ENCODE measurements at regions of chr17 and their contacts with region 1.

Region 1: DNA sequence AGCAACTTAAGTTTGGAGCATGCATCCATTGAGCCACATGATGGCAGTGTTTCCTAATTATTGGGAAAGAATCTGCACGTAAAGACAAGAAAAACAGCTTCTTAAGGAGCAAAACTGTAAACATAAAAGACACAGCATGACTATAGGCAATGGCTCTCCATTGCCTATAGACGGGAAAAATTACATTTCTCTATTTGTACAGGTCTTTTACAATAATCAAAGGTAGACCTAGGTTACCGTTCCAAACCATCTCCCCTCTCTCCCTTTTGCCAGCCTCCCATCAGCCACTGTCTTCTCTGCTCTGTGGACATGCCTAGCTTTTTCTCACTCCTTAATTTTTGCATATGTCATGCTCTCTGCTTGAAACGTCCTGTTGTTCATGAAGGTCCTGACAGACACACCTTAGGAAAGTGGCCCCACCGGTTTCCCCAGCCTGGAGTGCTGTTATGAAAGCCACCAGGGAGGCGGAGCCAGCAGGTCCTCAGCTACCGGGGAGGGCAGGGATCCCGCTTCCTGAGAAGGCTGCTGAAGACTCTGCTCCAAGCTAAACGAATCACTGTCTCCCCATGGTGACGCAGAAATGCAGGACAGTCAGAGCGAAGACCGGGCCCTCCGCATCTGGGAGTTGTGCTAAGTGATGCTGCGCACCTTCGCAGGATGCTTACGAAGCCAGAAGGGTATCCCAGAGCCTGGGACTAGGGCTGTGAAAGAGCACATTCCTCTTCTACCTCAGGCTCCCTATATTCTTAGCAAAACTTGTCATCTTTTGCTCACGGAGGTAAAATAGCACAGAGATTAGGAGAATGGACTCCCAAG is 2.2 kb upstream of the SLC16A11 start:
- DNase-seq: peak; percentile 85
- ATAC-seq: peak; percentile 13
- H3K4me3 ChIP-seq: peak overlapping the region; percentile 42 to 67 (median 58)
- H3K4me3 Mint-ChIP-seq: peak overlapping the region; percentile 77
- H3K27ac ChIP-seq: peak overlapping the region; percentile 61 to 81
- H3K27ac Mint-ChIP-seq: peak overlapping the region; percentile 92
- H3K4me1 ChIP-seq: peaks cover 35 to 46% of the 10 kb centered on the region in 2 donors
- H3K4me1 Mint-ChIP-seq: peaks cover 39% of the 10 kb centered on the region
- H3K27me3 ChIP-seq: peaks cover 0 to 4% (median 0%) of the 10 kb centered on the region in 4 experiments
- H3K27me3 Mint-ChIP-seq: peaks cover 3% of the 10 kb centered on the region
- CTCF ChIP-seq: peak; percentile 82

Region 2: DNA sequence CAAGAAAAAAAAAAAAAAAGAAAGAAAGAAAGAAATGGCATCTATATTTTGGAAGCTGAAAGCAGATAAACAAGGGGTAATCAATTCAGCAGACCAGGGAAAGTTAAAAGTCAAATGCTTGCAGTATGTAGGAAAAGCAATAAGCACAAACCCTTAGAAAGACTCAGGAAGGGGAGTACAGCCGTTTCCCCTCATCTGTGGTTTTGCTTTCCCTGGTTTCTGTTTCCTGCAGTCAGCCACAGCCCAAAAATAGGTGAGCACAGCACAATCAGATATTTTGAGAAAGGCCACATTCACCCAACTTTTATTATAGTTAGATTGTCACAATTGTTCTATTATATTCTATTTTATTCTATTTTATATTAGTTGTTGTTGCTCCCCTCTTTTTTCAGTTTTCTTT is 64.7 kb before region 1 on chr17:
- CTCF ChIA-PET with region 1: no interaction called
- POLR2A ChIA-PET with region 1: no interaction called
- intact Hi-C with region 1: no loop called
- DNase-seq: no peak
- ATAC-seq: no peak
- H3K4me3 ChIP-seq: no peak overlapping the region
- H3K4me3 Mint-ChIP-seq: no peak overlapping the region
- H3K27ac ChIP-seq: no peak overlapping the region
- H3K27ac Mint-ChIP-seq: no peak overlapping the region
- H3K4me1 ChIP-seq: peaks cover 0 to 4% of the 10 kb centered on the region in 2 donors
- H3K4me1 Mint-ChIP-seq: peaks cover 3% of the 10 kb centered on the region
- H3K27me3 ChIP-seq: no peaks in the 10 kb centered on the region
- H3K27me3 Mint-ChIP-seq: no peaks in the 10 kb centered on the region
- CTCF ChIP-seq: no peak

Region 3: DNA sequence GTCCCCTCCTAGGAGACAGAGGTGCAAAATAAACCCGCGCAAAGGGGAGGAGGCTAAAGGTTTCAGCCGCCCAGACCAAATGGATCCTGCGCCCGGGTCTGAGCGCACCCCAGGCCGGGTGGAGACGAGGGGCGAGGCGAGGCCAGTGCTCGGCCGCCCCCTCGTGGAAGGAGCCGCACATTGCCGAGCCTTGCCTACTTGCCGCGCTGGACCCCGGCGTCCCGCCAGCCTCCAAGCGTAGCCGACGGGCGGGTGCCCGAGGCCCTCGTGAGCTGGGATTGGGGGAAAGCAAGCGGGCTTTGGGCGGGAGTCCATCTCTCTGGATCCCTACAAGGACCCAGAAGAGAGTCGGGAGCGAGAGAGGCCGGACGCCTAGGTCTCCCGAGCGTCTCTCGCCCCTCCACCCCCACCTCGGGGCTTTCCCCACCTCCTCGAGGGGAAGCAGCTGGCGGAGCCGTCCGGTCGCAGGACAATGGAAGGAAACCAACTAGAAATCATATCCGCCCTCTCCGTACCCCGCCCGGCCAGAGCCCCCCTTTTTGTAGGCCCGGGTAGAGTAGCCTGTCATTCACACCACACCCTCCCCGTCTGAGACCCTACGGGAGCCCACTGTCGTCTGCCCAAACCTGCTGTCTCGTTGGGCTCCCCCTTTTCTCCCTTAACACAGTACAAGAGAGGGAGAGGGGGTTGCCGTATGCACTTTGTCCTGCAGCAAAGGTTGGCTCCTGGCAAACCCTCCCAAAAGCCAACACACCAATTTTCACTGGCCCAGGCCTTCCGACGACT is 23.9 kb before region 1 on chr17:
- CTCF ChIA-PET with region 1: interaction called, 51 read pairs
- POLR2A ChIA-PET with region 1: interaction called, 6 read pairs
- intact Hi-C with region 1: no loop called
- DNase-seq: peak; percentile 92
- ATAC-seq: peak; percentile 82
- H3K4me3 ChIP-seq: peak overlapping the region in 4 of 5 experiments; percentile 44 to 71 (median 62)
- H3K4me3 Mint-ChIP-seq: peak overlapping the region; percentile 82
- H3K27ac ChIP-seq: peak overlapping the region; percentile 73 to 80
- H3K27ac Mint-ChIP-seq: peak overlapping the region; percentile 92
- H3K4me1 ChIP-seq: peaks cover 21 to 27% of the 10 kb centered on the region in 2 donors
- H3K4me1 Mint-ChIP-seq: peaks cover 28% of the 10 kb centered on the region
- H3K27me3 ChIP-seq: no peaks in the 10 kb centered on the region
- H3K27me3 Mint-ChIP-seq: no peaks in the 10 kb centered on the region
- CTCF ChIP-seq: peak; percentile 98

Region 4: GRCh38 chr17:7130621-7131422 is 84.7 kb after region 1 on chr17:
- CTCF ChIA-PET with region 1: interaction called, 584 read pairs
- POLR2A ChIA-PET with region 1: interaction called, 21 read pairs
- intact Hi-C with region 1: loop called (anchors 1 kb)
- DNase-seq: peak; percentile 71
- ATAC-seq: peak; percentile 22
- H3K4me3 ChIP-seq: peak overlapping the region in 1 of 5 experiments; percentile 7
- H3K4me3 Mint-ChIP-seq: peak overlapping the region; percentile 71
- H3K27ac ChIP-seq: peak overlapping the region; percentile 70 to 98
- H3K27ac Mint-ChIP-seq: peak overlapping the region; percentile 81
- H3K4me1 ChIP-seq: peaks cover 41 to 49% of the 10 kb centered on the region in 2 donors
- H3K4me1 Mint-ChIP-seq: peaks cover 35% of the 10 kb centered on the region
- H3K27me3 ChIP-seq: peaks cover 0 to 5% (median 0%) of the 10 kb centered on the region in 4 experiments
- H3K27me3 Mint-ChIP-seq: no peaks in the 10 kb centered on the region
- CTCF ChIP-seq: no peak

Region 5: DNA sequence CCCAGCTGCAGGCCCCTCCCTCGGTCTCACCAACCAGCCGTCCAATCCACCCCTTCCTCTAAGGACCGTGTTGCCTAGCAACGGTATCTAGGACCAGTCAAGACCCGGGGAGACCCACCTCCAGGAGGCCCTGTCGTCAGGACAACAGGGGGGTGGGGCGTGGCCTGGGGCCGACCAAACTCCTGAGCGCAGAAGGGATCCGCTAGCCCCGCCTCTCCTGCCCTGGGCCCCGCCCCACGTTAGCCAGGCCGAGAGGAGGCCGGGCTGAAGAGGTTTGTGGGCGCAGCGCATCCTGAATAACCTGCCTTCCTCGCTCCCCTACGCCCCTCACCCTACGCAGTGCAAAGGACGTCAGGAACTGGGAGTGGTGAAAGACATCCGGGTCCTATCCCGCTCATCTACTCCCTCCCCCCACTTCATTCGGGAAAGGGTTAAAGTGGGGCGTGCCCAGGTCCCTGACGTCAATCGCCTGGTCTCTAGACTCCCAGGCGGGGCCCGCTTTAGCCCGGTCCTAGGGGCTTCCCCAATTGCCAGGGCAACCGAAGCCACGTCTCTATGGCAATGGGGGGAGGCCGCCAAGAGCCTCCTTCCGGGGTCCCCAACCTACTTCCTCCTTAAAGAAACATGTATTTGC is 158.8 kb after region 1 on chr17:
- CTCF ChIA-PET with region 1: interaction called, 3 read pairs
- POLR2A ChIA-PET with region 1: no interaction called
- intact Hi-C with region 1: loop called (anchors 2 kb)
- DNase-seq: peak; percentile 99
- ATAC-seq: peak; percentile 85
- H3K4me3 ChIP-seq: peak overlapping the region in 4 of 5 experiments; percentile 49 to 65 (median 55)
- H3K4me3 Mint-ChIP-seq: peak overlapping the region; percentile 82
- H3K27ac ChIP-seq: peak overlapping the region; percentile 86 to 93
- H3K27ac Mint-ChIP-seq: peak overlapping the region; percentile 91
- H3K4me1 ChIP-seq: peaks cover 17 to 25% of the 10 kb centered on the region in 2 donors
- H3K4me1 Mint-ChIP-seq: peaks cover 28% of the 10 kb centered on the region
- H3K27me3 ChIP-seq: no peaks in the 10 kb centered on the region
- H3K27me3 Mint-ChIP-seq: peaks cover under 1% of the 10 kb centered on the region
- CTCF ChIP-seq: no peak

Region 6: GRCh38 chr17:7296189-7296902 is 250.2 kb after region 1 on chr17:
- CTCF ChIA-PET with region 1: interaction called, 58 read pairs
- POLR2A ChIA-PET with region 1: interaction called, 5 read pairs
- intact Hi-C with region 1: no loop called
- DNase-seq: peak; percentile 84
- ATAC-seq: peak; percentile 58
- H3K4me3 ChIP-seq: peak overlapping the region in 2 of 5 experiments; percentile 12 to 14
- H3K4me3 Mint-ChIP-seq: peak overlapping the region; percentile 83
- H3K27ac ChIP-seq: no peak overlapping the region
- H3K27ac Mint-ChIP-seq: peak overlapping the region; percentile 47
- H3K4me1 ChIP-seq: peaks cover 28 to 30% of the 10 kb centered on the region in 2 donors
- H3K4me1 Mint-ChIP-seq: peaks cover 22% of the 10 kb centered on the region
- H3K27me3 ChIP-seq: peaks cover 0 to 52% (median 14%) of the 10 kb centered on the region in 4 experiments
- H3K27me3 Mint-ChIP-seq: peaks cover 36% of the 10 kb centered on the region
- CTCF ChIP-seq: peak; percentile 93

Region 7: DNA sequence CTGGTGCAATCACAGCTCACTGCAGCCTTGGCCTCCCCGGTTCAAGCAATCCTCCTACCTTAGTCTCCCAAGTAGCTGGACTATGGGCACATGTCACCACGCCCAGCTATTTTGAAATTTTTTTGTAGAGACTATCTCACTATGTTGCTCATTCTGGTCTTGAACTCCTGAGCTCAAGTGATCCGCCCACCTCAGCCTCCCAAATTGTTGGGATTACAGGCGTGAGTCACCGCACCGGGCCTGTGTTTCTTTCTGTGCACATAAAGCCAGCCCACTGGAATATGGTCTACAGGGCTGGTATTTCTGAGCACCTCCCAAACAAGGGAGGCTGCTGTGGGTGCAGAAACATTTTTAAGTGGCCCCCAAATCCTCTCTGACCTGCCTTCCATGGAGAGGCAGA is 317.2 kb after region 1 on chr17:
- CTCF ChIA-PET with region 1: no interaction called
- POLR2A ChIA-PET with region 1: no interaction called
- intact Hi-C with region 1: no loop called
- DNase-seq: no peak
- ATAC-seq: no peak
- H3K4me3 ChIP-seq: no peak overlapping the region
- H3K4me3 Mint-ChIP-seq: no peak overlapping the region
- H3K27ac ChIP-seq: no peak overlapping the region
- H3K27ac Mint-ChIP-seq: no peak overlapping the region
- H3K4me1 ChIP-seq: no peaks in the 10 kb centered on the region
- H3K4me1 Mint-ChIP-seq: no peaks in the 10 kb centered on the region
- H3K27me3 ChIP-seq: peaks cover 0 to 6% (median 1%) of the 10 kb centered on the region in 4 experiments
- H3K27me3 Mint-ChIP-seq: peaks cover 3% of the 10 kb centered on the region
- CTCF ChIP-seq: no peak

Region 8: GRCh38 chr17:7589204-7589868 is 543.2 kb after region 1 on chr17:
- CTCF ChIA-PET with region 1: interaction called, 10 read pairs
- POLR2A ChIA-PET with region 1: no interaction called
- intact Hi-C with region 1: loop called (anchors 10 kb)
- DNase-seq: peak; percentile 84
- ATAC-seq: peak; percentile 86
- H3K4me3 ChIP-seq: no peak overlapping the region
- H3K4me3 Mint-ChIP-seq: no peak overlapping the region
- H3K27ac ChIP-seq: no peak overlapping the region
- H3K27ac Mint-ChIP-seq: no peak overlapping the region
- H3K4me1 ChIP-seq: peaks cover 7 to 21% of the 10 kb centered on the region in 2 donors
- H3K4me1 Mint-ChIP-seq: peaks cover 10% of the 10 kb centered on the region
- H3K27me3 ChIP-seq: no peaks in the 10 kb centered on the region
- H3K27me3 Mint-ChIP-seq: no peaks in the 10 kb centered on the region
- CTCF ChIP-seq: peak; percentile 91

Measured in B cell (primary cell).